ENCODE measurements at regions of chr13 and their contacts with region 1.

Region 1: DNA sequence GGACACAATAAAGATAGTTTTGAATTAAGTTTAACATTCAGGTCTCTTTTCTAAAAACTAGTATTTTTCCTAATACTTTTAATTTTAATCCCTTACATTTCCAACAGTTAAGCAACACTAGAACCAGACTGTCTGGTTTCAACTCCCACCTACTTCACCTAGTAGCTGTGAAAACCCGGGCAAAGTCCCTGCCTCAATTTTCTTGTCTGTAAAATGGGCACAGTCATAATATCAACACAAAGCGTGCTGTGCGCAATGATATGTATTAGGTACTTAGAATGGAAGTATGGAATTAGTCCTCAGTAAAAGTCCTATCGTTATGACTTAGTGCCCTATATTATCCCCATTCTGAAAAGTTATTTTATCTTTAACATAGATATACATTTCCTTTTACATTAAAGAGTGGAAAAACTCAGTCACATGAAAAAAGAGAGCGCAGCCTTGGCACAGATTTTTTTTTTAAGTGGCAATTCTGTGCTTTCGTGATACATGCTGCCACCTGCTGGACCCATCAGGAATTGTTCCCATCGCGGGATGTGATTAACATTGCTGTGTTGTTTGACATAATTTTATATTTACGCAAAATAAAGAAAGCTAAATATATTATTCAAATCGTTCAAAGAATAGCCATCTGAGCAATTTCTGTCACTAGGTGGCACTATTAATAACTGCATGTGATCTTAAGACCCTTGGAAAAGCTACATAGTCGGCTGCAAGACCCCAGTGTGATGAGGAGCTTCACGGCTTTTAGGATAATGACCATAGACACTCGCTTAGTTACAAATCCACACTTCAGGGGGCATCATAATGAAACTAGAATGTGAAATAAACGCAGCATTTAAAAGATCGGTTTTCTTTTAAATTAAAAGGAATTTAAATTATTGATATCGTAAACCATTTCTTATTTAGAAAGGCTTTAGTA is 59.9 kb downstream of the LIG4 start:
- DNase-seq: no peak
- H3K4me3 ChIP-seq: no peak overlapping the region
- H3K27me3 ChIP-seq: no peaks in the 10 kb centered on the region
- CTCF ChIP-seq: peak; percentile 76

Region 2: DNA sequence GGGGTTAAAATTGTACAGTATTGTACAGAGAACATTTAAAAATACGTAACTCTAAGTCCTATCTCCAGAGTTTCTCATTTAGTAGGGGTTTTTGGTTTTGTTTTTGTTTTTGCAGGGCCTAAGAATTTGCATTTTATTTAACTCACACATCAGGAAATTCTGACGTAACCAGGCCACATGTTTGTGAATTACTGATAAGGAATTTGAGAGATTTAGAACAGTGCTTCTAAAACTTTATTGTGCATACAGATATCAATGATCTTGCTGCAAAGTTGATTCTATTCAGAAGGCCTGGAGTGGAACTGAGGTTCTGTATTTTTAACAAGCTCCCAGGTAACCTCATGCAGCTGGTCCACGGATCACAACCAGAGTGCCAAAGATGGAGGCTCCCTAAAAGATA is 10.6 kb after region 1 on chr13:
- CTCF ChIA-PET with region 1: interaction called, 12 read pairs
- POLR2A ChIA-PET with region 1: no interaction called
- DNase-seq: no peak
- H3K4me3 ChIP-seq: no peak overlapping the region
- H3K27me3 ChIP-seq: no peaks in the 10 kb centered on the region
- CTCF ChIP-seq: no peak

Measured in BJ (cell line).